Calu3 (cell line): ENCODE measurements at regions of chr6 and their contacts with region 1.

Region 1: DNA sequence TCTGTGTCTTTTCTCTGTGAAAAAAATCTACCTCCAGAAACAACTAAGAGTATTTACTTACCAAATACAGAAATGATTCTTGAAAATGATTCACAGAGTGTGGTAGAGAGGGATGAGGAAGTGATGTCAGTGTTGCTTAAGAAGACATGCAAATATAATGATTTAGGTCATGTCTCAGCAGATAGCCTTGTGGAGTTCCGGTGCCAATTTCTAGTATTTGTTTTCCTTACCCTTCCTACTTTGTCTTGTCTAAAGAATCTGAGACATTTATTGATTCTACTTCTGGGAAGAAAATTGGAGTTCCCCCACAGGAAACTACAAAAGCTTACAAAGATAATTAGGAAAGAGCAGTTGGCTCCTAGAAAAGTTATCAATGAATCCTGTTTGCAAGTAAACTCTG is 68.8 kb downstream of the GJA1 start:
- DNase-seq: peak; percentile 40
- H3K4me3 Mint-ChIP-seq: peak overlapping the region; percentile 11
- H3K27ac Mint-ChIP-seq: peak overlapping the region; percentile 94
- H3K4me1 Mint-ChIP-seq: peaks cover 39% of the 10 kb centered on the region
- H3K27me3 Mint-ChIP-seq: no peaks in the 10 kb centered on the region
- CTCF ChIP-seq: no peak

Region 2: DNA sequence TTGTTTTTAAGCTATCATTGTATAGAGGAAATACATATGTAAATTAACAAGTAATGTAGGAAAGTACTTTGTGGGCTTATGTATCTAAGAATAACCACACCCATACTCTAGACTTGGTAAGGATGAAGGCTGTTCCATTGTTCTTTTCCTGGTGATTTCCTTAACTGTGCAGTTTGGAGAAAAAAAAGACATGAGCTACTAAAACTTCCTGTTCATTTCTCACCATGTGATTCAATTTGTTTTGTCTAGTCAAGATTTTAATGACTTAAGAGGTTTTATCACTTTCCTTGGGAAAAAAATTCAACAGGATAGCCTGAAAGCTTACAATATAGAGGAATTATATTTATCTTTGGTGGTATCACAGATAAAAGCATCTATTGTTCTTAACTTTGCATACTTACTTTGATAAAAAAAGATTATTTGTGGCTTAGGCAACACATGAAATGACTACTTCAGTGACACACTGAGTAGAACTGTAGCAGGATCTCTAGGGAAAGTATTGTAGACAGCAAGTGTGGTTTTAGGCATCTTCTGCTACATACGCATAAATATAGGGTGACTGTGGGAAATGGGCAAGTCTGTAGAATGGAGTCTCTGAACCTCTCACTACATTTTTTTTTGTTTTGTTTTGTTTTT is 11.5 kb after region 1 on chr6:
- CTCF ChIA-PET with region 1: interaction called, 6 read pairs
- intact Hi-C with region 1: loop called (anchors 1 kb)
- DNase-seq: no peak
- H3K4me3 Mint-ChIP-seq: no peak overlapping the region
- H3K27ac Mint-ChIP-seq: peak overlapping the region; percentile 96
- H3K4me1 Mint-ChIP-seq: peaks cover 34% of the 10 kb centered on the region
- H3K27me3 Mint-ChIP-seq: no peaks in the 10 kb centered on the region
- CTCF ChIP-seq: no peak